Body of pancreas (tissue), 4 donors: ENCODE measurements at regions of chr6 and their contacts with region 1.

Region 1: GRCh38 chr6:110949679-110950285 is 8.7 kb upstream of the GTF3C6 start:
- DNase-seq: no peak
- ATAC-seq: no peak
- H3K4me3 ChIP-seq: no peak overlapping the region
- H3K27ac ChIP-seq: no peak overlapping the region
- H3K4me1 ChIP-seq: peaks cover 4% of the 10 kb centered on the region
- H3K27me3 ChIP-seq: no peaks in the 10 kb centered on the region
- CTCF ChIP-seq: peak; percentile 19 to 76 (median 53)
- POLR2A ChIP-seq: no peak

Region 2: DNA sequence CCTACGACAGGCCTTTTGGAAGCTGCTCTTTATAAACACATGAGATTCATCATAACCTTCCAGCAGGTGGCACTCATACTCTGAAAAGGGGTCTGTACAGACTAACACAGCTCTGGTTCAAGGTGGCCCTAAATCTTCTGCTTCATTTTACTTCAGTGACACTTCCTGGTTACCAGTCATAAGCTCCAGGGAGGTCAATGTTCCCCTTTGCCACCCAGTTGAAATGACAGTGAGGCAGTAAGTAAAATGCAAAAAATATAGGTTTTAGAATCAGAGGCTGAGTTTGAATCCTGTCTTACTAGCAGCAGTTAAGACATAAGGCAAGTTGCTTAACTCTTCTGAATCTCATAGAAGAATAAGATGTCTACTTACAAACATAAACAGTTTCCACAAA is 267.3 kb before region 1 on chr6:
- intact Hi-C with region 1: loop called (anchors 5 kb)
- DNase-seq: peak; percentile 67 to 87 (median 70)
- ATAC-seq: peak; percentile 97
- H3K4me3 ChIP-seq: no peak overlapping the region
- H3K27ac ChIP-seq: no peak overlapping the region
- H3K4me1 ChIP-seq: peaks cover 10% of the 10 kb centered on the region
- H3K27me3 ChIP-seq: no peaks in the 10 kb centered on the region
- CTCF ChIP-seq: peak; percentile 23 to 86 (median 79)
- POLR2A ChIP-seq: no peak